ENCODE measurements at regions of chr2 and their contacts with region 1.

Region 1: DNA sequence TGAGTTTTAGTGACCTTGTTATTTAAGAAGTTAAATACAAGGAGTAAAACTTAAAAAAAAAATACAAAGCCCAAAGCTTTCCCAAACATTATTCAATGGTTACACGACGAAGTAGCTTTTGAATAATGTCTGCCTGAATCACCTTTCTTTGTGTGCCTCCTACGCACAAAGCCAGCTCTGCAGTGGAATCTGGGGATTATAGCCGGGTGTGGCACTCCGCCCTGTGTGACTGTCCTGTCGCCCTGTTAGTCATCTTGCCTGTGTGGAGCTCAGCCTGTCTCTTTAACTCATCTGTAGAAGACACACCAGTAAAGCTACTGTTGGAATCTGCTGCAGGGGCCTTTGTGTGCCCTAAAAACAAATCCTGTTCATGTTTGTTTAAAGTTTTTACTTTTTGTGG is 79.4 kb upstream of the TCF7L1 start:
- DNase-seq: no peak
- ATAC-seq: no peak
- H3K4me3 Mint-ChIP-seq: no peak overlapping the region
- H3K27ac Mint-ChIP-seq: no peak overlapping the region
- H3K4me1 Mint-ChIP-seq: peaks cover 48% of the 10 kb centered on the region
- H3K27me3 Mint-ChIP-seq: no peaks in the 10 kb centered on the region

Region 2: GRCh38 chr2:85066874-85067351 is 13.1 kb after region 1 on chr2:
- CTCF ChIA-PET with region 1: interaction called, 13 read pairs
- POLR2A ChIA-PET with region 1: no interaction called
- DNase-seq: peak; percentile 63
- ATAC-seq: peak; percentile 53
- H3K4me3 Mint-ChIP-seq: no peak overlapping the region
- H3K27ac Mint-ChIP-seq: no peak overlapping the region
- H3K4me1 Mint-ChIP-seq: no peaks in the 10 kb centered on the region
- H3K27me3 Mint-ChIP-seq: peaks cover 25% of the 10 kb centered on the region